ENCODE measurements at regions of chr13 and their contacts with region 1.

Region 1: DNA sequence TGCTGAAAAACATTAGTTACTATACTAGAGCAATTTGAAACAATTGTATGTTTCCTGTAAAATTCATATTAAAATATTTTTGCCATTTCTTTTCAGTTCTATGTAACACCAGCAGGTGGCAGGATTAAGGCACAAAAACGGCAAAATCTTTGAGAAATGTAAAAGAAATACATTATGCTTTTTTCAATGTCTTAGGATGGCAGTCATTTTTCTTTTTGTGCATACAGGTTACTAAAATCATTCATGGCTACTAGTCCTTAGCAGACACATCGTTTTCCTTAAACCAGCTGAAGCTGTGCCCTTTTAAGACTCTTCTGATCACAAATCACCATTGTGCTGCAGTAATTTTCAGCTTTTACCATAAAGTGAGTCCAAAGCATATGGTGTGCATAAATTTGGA is 800.7 kb upstream of the SLITRK5 start:
- DNase-seq: no peak
- ATAC-seq: no peak
- H3K4me3 Mint-ChIP-seq: no peak overlapping the region
- H3K27ac Mint-ChIP-seq: no peak overlapping the region
- H3K4me1 Mint-ChIP-seq: no peaks in the 10 kb centered on the region
- H3K27me3 Mint-ChIP-seq: no peaks in the 10 kb centered on the region
- CTCF ChIP-seq: peak; percentile 53

Region 2: DNA sequence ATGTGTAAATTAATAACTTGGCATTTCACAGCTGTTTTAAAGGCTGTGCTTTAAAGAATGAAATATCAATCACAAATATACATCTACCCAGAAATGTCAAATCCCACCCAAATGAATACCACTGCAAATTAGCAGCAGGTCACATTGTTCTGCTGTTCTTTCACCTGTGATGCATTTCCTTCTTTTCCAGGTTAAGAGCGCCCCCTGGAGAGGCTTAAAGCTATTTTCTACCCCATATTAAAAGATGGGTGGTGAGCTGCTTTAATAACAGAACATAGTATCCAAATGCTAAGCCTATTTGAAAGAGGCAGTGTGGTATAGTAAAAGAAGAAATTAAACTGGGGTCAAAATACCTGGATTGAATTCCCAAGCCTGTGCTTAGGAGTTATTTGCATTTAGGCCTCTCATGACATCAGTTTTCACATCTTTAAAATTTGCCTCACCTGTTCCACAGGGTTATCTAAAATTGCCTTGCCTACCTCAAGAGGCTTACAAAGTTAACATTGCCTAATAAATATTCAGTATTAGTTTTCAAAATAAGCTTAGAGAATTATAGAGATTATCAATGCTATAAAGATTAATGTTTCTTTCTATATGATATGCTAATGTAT is 403.9 kb after region 1 on chr13:
- CTCF ChIA-PET with region 1: interaction called, 29 read pairs
- POLR2A ChIA-PET with region 1: no interaction called
- intact Hi-C with region 1: loop called (anchors 10 kb)
- DNase-seq: peak; percentile 53
- ATAC-seq: no peak
- H3K4me3 Mint-ChIP-seq: no peak overlapping the region
- H3K27ac Mint-ChIP-seq: no peak overlapping the region
- H3K4me1 Mint-ChIP-seq: no peaks in the 10 kb centered on the region
- H3K27me3 Mint-ChIP-seq: no peaks in the 10 kb centered on the region
- CTCF ChIP-seq: peak; percentile 45

Region 3: GRCh38 chr13:87314822-87315221 is 444.4 kb after region 1 on chr13:
- CTCF ChIA-PET with region 1: no interaction called
- POLR2A ChIA-PET with region 1: no interaction called
- intact Hi-C with region 1: no loop called
- DNase-seq: no peak
- ATAC-seq: no peak
- H3K4me3 Mint-ChIP-seq: no peak overlapping the region
- H3K27ac Mint-ChIP-seq: no peak overlapping the region
- H3K4me1 Mint-ChIP-seq: no peaks in the 10 kb centered on the region
- H3K27me3 Mint-ChIP-seq: no peaks in the 10 kb centered on the region
- CTCF ChIP-seq: no peak